CD8-positive, alpha-beta T cell (primary cell): ENCODE measurements at regions of chr4 and their contacts with region 1.

Region 1: GRCh38 chr4:88225232-88226105 is 58.9 kb downstream of the PPM1K start:
- DNase-seq: no peak
- ATAC-seq: no peak
- H3K4me3 ChIP-seq: no peak overlapping the region
- H3K4me3 Mint-ChIP-seq: no peak overlapping the region
- H3K27ac ChIP-seq: no peak overlapping the region
- H3K27ac Mint-ChIP-seq: no peak overlapping the region
- H3K4me1 ChIP-seq: no peaks in the 10 kb centered on the region
- H3K4me1 Mint-ChIP-seq: peaks cover 2% of the 10 kb centered on the region
- H3K27me3 ChIP-seq: no peaks in the 10 kb centered on the region
- H3K27me3 Mint-ChIP-seq: no peaks in the 10 kb centered on the region
- CTCF ChIP-seq: no peak

Region 2: GRCh38 chr4:88419874-88420273 is 194.4 kb after region 1 on chr4:
- CTCF ChIA-PET with region 1: no interaction called
- POLR2A ChIA-PET with region 1: no interaction called
- intact Hi-C with region 1: no loop called
- DNase-seq: no peak
- ATAC-seq: no peak
- H3K4me3 ChIP-seq: no peak overlapping the region
- H3K4me3 Mint-ChIP-seq: no peak overlapping the region
- H3K27ac ChIP-seq: no peak overlapping the region
- H3K27ac Mint-ChIP-seq: no peak overlapping the region
- H3K4me1 ChIP-seq: no peaks in the 10 kb centered on the region
- H3K4me1 Mint-ChIP-seq: no peaks in the 10 kb centered on the region
- H3K27me3 ChIP-seq: no peaks in the 10 kb centered on the region
- H3K27me3 Mint-ChIP-seq: no peaks in the 10 kb centered on the region
- CTCF ChIP-seq: no peak

Region 3: GRCh38 chr4:88659055-88659889 is 433.8 kb after region 1 on chr4:
- CTCF ChIA-PET with region 1: no interaction called
- POLR2A ChIA-PET with region 1: no interaction called
- intact Hi-C with region 1: loop called in 1 of 2 experiments (anchors 10 kb)
- DNase-seq: peak in 5 of 9 experiments; percentile 30 to 62 (median 40)
- ATAC-seq: peak; percentile 78
- H3K4me3 ChIP-seq: no peak overlapping the region
- H3K4me3 Mint-ChIP-seq: no peak overlapping the region
- H3K27ac ChIP-seq: no peak overlapping the region
- H3K27ac Mint-ChIP-seq: peak overlapping the region; percentile 10
- H3K4me1 ChIP-seq: no peaks in the 10 kb centered on the region
- H3K4me1 Mint-ChIP-seq: peaks cover 2% of the 10 kb centered on the region
- H3K27me3 ChIP-seq: no peaks in the 10 kb centered on the region
- H3K27me3 Mint-ChIP-seq: no peaks in the 10 kb centered on the region
- CTCF ChIP-seq: peak; percentile 72

Region 4: GRCh38 chr4:88697588-88698329 is 472.3 kb after region 1 on chr4 and contains the start of gene NAP1L5:
- CTCF ChIA-PET with region 1: no interaction called
- POLR2A ChIA-PET with region 1: no interaction called
- intact Hi-C with region 1: no loop called
- DNase-seq: peak; percentile 34 to 92 (median 74)
- ATAC-seq: peak; percentile 89
- H3K4me3 ChIP-seq: peak within 1 kb of the TSS; percentile 64 to 77
- H3K4me3 Mint-ChIP-seq: peak within 1 kb of the TSS; percentile 89
- H3K27ac ChIP-seq: peak within 1 kb of the TSS; percentile 73 to 79
- H3K27ac Mint-ChIP-seq: peak within 1 kb of the TSS; percentile 90
- H3K4me1 ChIP-seq: peaks cover 4% of the 10 kb centered on the region
- H3K4me1 Mint-ChIP-seq: peaks cover 18% of the 10 kb centered on the region
- H3K27me3 ChIP-seq: no peaks in the 10 kb centered on the region
- H3K27me3 Mint-ChIP-seq: no peaks in the 10 kb centered on the region
- CTCF ChIP-seq: no peak
- total RNA-seq, gene NAP1L5: 15.5 to 16.3 TPM